Activated CD4-positive, alpha-beta memory T cell treated with anti-CD3 and anti-CD28 coated beads for 36 hours (primary cell): ENCODE measurements at regions of chr19 and their contacts with region 1.

Region 1: DNA sequence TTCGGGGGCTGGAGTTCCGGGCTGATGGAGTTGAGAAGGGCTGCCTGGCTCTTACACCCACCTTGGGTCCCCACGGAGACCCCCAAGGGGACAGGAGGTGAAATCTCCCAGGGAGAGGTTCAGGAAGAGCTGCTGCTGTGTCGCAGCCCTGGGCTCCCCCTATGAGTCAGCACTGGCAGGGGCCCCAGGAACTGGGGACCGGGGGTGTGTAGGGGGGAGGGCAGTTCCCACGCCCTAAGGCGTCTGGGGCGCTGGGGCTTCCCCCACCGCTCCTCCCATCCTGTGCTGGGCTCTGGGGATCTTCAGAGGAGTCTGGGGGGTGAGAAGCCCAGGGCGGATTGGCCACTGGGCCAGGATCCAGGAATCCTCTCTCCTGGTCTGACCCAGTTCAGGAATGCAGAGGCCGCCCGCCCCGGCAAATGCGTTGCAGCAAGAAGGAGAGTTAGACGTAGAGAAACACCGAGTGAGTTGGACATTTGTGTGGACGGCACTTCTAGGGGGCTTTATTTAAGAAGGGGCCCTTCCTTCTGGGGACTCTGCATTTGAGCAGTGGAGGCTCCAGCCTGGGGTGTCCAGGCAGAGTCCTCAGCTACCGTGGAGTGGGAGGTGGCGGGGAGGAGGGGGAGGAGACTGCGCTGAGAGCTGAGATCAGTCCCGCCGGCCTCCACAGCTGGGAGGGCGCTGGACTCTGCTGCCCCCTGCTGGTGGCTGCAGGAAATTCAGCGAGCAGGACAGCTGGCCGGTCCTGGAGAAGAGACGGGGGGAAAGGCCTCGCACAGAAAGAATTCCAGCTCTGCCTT is 15.0 kb upstream of the NANOS3 start:
- DNase-seq: peak; percentile 94
- H3K4me3 Mint-ChIP-seq: peak overlapping the region; percentile 97
- H3K27ac Mint-ChIP-seq: peak overlapping the region; percentile 99
- H3K4me1 Mint-ChIP-seq: peaks cover 38% of the 10 kb centered on the region
- H3K27me3 Mint-ChIP-seq: peaks cover 21% of the 10 kb centered on the region

Region 2: DNA sequence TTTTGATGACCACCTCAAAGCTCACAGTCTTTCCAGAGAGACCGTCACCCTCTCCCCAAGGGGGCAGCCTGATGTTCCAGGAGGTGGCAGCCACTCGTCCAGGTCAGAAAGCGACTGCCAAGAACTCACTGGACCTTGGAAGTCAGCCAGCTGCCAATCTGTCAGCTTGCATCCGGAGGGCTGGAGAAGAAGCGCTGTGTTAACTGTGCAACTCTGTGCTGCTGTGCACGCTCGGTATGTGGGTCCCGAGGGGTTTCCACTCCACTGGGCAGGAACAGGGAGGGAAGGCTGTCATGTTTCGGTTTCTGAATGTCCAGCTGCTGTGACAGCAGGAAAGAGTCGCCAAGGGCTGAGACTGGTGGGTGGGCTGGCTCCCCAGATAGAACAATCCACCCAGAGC is 444.9 kb before region 1 on chr19:
- CTCF ChIA-PET with region 1: no interaction called
- POLR2A ChIA-PET with region 1: no interaction called
- intact Hi-C with region 1: no loop called
- DNase-seq: no peak
- H3K4me3 Mint-ChIP-seq: no peak overlapping the region
- H3K27ac Mint-ChIP-seq: no peak overlapping the region
- H3K4me1 Mint-ChIP-seq: no peaks in the 10 kb centered on the region
- H3K27me3 Mint-ChIP-seq: peaks cover 4% of the 10 kb centered on the region

Region 3: GRCh38 chr19:13597640-13598039 is 264.3 kb before region 1 on chr19:
- CTCF ChIA-PET with region 1: interaction called, 17 read pairs
- POLR2A ChIA-PET with region 1: no interaction called
- intact Hi-C with region 1: loop called (anchors 1 kb)
- DNase-seq: peak; percentile 66
- H3K4me3 Mint-ChIP-seq: no peak overlapping the region
- H3K27ac Mint-ChIP-seq: no peak overlapping the region
- H3K4me1 Mint-ChIP-seq: peaks cover 4% of the 10 kb centered on the region
- H3K27me3 Mint-ChIP-seq: peaks cover 10% of the 10 kb centered on the region

Region 4: GRCh38 chr19:13644645-13645044 is 217.3 kb before region 1 on chr19:
- CTCF ChIA-PET with region 1: no interaction called
- POLR2A ChIA-PET with region 1: no interaction called
- intact Hi-C with region 1: no loop called
- DNase-seq: no peak
- H3K4me3 Mint-ChIP-seq: no peak overlapping the region
- H3K27ac Mint-ChIP-seq: no peak overlapping the region
- H3K4me1 Mint-ChIP-seq: no peaks in the 10 kb centered on the region
- H3K27me3 Mint-ChIP-seq: peaks cover 6% of the 10 kb centered on the region

Region 5: GRCh38 chr19:13748169-13748828 is 113.6 kb before region 1 on chr19:
- CTCF ChIA-PET with region 1: interaction called, 14 read pairs
- POLR2A ChIA-PET with region 1: interaction called, 5 read pairs
- intact Hi-C with region 1: no loop called
- DNase-seq: peak; percentile 49
- H3K4me3 Mint-ChIP-seq: peak overlapping the region; percentile 92
- H3K27ac Mint-ChIP-seq: peak overlapping the region; percentile 82
- H3K4me1 Mint-ChIP-seq: peaks cover 28% of the 10 kb centered on the region
- H3K27me3 Mint-ChIP-seq: no peaks in the 10 kb centered on the region

Region 6: GRCh38 chr19:13794757-13795589 is 67.0 kb before region 1 on chr19 and contains the start of gene ZSWIM4:
- CTCF ChIA-PET with region 1: interaction called, 145 read pairs
- POLR2A ChIA-PET with region 1: interaction called, 10 read pairs
- intact Hi-C with region 1: no loop called
- DNase-seq: peak; percentile 99
- H3K4me3 Mint-ChIP-seq: peak within 1 kb of the TSS; percentile 95
- H3K27ac Mint-ChIP-seq: peak within 1 kb of the TSS; percentile 79
- H3K4me1 Mint-ChIP-seq: peaks cover 24% of the 10 kb centered on the region
- H3K27me3 Mint-ChIP-seq: no peaks in the 10 kb centered on the region
- total RNA-seq, gene ZSWIM4: 9.2 to 10.2 TPM

Region 7: DNA sequence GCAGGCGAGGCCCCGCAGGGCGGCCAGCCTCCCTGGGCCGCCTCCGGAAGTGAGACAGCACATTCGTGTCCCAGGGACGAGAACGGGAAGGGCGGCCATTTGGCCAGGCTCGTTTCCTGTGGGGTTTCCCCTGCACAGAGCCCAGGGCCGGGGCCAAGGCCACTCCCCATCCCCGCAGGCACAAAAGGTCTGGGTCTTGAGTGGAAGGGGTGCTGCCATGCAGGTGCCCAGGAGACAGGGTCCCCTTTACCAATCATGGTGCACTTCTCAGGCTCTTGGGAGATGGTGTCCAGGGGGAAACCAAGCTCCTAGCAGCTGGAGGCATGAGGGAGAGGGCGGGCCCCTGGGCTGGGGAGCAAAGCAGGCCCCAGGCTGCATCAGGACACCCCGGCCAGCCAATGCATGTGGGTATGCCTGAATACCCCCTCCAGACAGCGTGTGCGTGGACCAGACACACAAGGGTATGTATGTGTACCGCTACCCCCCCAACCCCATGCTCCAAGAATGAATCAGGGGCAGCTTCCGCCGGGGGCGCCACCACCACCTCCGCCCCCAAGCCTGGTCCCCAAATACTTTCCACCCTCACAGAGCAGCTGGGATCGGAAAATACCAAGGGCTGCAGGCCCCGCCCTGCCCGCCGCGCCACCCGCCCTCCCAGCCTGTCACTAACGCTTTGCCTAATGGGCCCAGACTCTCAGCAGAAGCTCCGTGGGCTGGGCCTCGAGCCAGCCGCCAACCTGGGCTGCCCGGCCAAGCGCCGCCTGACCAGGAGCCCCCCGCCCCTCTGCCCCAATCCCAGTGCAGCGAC is 22.6 kb before region 1 on chr19:
- CTCF ChIA-PET with region 1: interaction called, 49 read pairs
- POLR2A ChIA-PET with region 1: interaction called, 14 read pairs
- intact Hi-C with region 1: loop called (anchors 1 kb)
- DNase-seq: peak; percentile 96
- H3K4me3 Mint-ChIP-seq: peak overlapping the region; percentile 91
- H3K27ac Mint-ChIP-seq: peak overlapping the region; percentile 97
- H3K4me1 Mint-ChIP-seq: peaks cover 33% of the 10 kb centered on the region
- H3K27me3 Mint-ChIP-seq: no peaks in the 10 kb centered on the region